H1 (cell line): ENCODE measurements at regions of chr6 and their contacts with region 1.

Region 1: DNA sequence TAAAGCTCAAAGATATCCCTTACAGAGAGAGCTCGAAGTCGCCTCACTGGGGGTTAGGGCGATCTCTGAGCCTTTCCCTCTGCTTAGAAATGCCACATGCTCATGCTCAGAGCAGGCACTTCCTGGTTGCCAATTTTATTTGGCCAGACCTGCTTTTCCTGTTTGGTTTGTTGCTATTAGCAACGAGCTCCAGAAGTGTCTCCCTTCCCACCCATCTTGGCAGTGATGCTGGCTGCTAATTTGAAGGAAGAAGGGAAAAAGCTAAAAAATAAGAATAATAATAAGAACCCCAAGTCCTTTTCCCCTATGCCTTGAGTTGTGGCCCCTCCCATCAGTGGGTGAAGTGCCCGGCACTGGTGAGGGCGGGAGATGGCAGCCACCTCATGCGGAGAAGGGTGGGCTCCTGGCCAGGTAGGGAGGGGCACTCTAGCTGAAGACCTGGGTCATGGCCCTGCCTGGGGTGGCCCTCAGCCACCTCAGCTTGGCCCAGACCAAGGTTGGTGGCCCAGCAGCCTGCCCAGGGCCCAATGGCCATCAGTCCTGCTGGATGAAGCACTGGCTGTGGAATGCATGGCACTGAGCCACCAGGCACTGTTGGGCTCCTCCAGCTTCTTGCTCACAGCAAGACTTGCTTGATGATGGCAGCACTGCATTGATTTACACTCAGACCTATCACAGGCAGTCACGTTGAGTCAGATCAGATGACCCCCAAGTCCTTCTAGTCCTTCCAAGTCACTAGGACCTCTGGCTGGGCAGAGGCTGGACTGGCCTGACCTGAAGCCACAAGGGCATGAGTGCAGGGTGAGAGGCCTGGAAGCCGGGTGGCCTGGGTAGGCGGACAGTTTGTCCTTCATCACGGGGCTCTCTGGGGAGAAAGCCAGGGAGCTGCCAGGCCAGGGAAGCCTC is 79.0 kb downstream of the SYNJ2 start:
- DNase-seq: no peak
- H3K4me3 ChIP-seq: no peak overlapping the region
- H3K27ac ChIP-seq: 0 out of 2 replicates have a peak overlapping the region, but pooled peaks have one; percentile 38
- H3K4me1 ChIP-seq: peaks cover 0 to 5% (median 0%) of the 10 kb centered on the region in 4 experiments; a peak in 1 of 7 replicates
- H3K27me3 ChIP-seq: no peaks in the 10 kb centered on the region
- CTCF ChIP-seq: no peak
- EP300 ChIP-seq: 0 out of 3 replicates have a peak, but pooled peaks of 1 of the 2 experiments have one; percentile 21
- POLR2A ChIP-seq: no peak
- RAD21 ChIP-seq: no peak

Region 2: GRCh38 chr6:158047127-158047518 is 13.6 kb before region 1 on chr6:
- CTCF ChIA-PET with region 1: interaction called, 11 read pairs
- POLR2A ChIA-PET with region 1: interaction called, 6 read pairs
- DNase-seq: no peak
- H3K4me3 ChIP-seq: no peak overlapping the region
- H3K27ac ChIP-seq: no peak overlapping the region
- H3K4me1 ChIP-seq: no peaks in the 10 kb centered on the region
- H3K27me3 ChIP-seq: no peaks in the 10 kb centered on the region
- CTCF ChIP-seq: no peak
- EP300 ChIP-seq: no peak
- POLR2A ChIP-seq: no peak
- RAD21 ChIP-seq: no peak